ENCODE measurements at regions of chr6 and their contacts with region 1.

Region 1: GRCh38 chr6:109187399-109188114 is 92.2 kb downstream of the CEP57L1 start:
- DNase-seq: peak; percentile 18 to 48 (median 47)
- H3K4me3 ChIP-seq: peak overlapping the region in 1 of 3 experiments; percentile 26
- H3K4me3 Mint-ChIP-seq: no peak overlapping the region
- H3K27ac ChIP-seq: no peak overlapping the region
- H3K27ac Mint-ChIP-seq: no peak overlapping the region
- H3K4me1 ChIP-seq: peaks cover 0 to 5% of the 10 kb centered on the region in 2 donors
- H3K4me1 Mint-ChIP-seq: peaks cover 9% of the 10 kb centered on the region
- H3K27me3 ChIP-seq: no peaks in the 10 kb centered on the region
- H3K27me3 Mint-ChIP-seq: peaks cover 0 to 1% (median 1%) of the 10 kb centered on the region in 3 donors
- CTCF ChIP-seq: peak; percentile 98

Region 2: GRCh38 chr6:109237077-109237985 is 49.8 kb after region 1 on chr6:
- intact Hi-C with region 1: no loop called
- DNase-seq: peak; percentile 85 to 94 (median 93)
- H3K4me3 ChIP-seq: peak overlapping the region; percentile 8 to 56 (median 55)
- H3K4me3 Mint-ChIP-seq: peak overlapping the region; percentile 62 to 79
- H3K27ac ChIP-seq: peak overlapping the region; percentile 92 to 96
- H3K27ac Mint-ChIP-seq: peak overlapping the region; percentile 96 to 99 (median 99)
- H3K4me1 ChIP-seq: peaks cover 66 to 75% of the 10 kb centered on the region in 2 donors
- H3K4me1 Mint-ChIP-seq: peaks cover 62% of the 10 kb centered on the region
- H3K27me3 ChIP-seq: no peaks in the 10 kb centered on the region
- H3K27me3 Mint-ChIP-seq: peaks cover 0 to 2% (median 0%) of the 10 kb centered on the region in 3 donors
- CTCF ChIP-seq: no peak

Region 3: DNA sequence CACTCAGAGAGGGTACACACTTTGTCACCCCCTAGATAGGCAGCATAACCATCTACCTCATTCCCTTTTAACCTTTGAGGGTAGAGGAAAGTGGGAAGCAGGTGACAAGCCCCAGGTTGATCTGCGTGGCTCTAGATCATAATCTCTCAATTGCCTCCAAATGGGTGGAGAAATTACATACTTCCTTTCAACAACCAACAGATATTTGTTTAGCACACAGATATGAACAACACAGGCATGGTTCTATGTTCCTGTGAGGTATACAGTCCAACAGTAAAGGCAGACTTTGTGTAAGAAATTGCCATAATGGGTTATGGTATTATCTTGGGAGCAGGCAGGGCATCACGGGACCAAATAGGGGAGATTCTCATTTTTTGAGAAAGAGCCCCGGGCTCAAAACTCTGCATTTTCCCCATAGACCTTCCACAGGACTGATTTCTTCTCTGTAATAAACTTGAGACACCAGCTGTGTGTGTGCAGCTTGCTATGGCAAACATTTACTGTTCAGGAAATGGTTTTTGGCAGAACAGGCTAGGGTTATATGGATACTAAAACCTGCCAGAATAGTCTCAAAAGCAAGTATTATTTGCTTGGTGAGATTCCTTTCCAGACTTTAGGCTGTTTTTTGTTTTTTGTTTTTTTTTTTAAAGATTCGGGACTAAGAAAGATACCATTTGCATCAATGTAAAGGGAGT is 68.5 kb after region 1 on chr6:
- intact Hi-C with region 1: no loop called
- DNase-seq: no peak
- H3K4me3 ChIP-seq: no peak overlapping the region
- H3K4me3 Mint-ChIP-seq: no peak overlapping the region
- H3K27ac ChIP-seq: no peak overlapping the region
- H3K27ac Mint-ChIP-seq: no peak overlapping the region
- H3K4me1 ChIP-seq: no peaks in the 10 kb centered on the region
- H3K4me1 Mint-ChIP-seq: peaks cover 2% of the 10 kb centered on the region
- H3K27me3 ChIP-seq: no peaks in the 10 kb centered on the region
- H3K27me3 Mint-ChIP-seq: peaks cover 0 to 2% (median 1%) of the 10 kb centered on the region in 3 donors
- CTCF ChIP-seq: no peak

Region 4: DNA sequence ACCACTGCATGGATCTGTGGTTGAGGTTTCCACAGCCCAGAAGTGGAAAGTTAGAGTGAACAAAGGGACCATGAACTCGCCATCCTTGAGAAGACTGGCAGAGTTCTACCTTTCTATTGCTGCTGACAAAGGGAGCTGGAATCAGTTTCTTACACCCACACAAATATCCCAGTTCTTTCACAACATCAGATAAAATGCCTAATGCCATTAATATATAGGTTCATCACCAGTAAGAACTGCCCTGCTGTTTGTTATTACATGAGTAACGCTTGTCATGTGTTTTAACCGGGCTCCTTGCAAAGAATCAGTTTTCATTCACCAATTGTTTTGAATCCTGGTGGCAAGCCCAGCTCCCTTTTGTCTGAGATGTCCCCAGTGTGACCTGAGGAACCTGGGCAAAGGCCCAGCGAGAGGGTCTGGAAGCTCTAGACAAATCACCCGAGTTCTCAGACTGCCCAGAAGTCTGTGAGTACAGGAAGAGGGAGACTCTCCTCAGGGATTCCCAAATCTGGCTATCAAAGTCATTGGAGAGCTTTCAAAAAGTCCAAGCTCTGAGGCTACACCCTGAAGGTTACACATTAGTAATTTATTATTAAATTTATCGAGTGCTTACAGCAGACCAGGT is 202.2 kb after region 1 on chr6:
- intact Hi-C with region 1: loop called in 1 of 2 experiments (anchors 5 kb)
- DNase-seq: no peak
- H3K4me3 ChIP-seq: no peak overlapping the region
- H3K4me3 Mint-ChIP-seq: no peak overlapping the region
- H3K27ac ChIP-seq: no peak overlapping the region
- H3K27ac Mint-ChIP-seq: peak overlapping the region in 3 of 7 donors; percentile 15 to 88 (median 22)
- H3K4me1 ChIP-seq: peaks cover 26 to 31% of the 10 kb centered on the region in 2 donors
- H3K4me1 Mint-ChIP-seq: peaks cover 48% of the 10 kb centered on the region
- H3K27me3 ChIP-seq: no peaks in the 10 kb centered on the region
- H3K27me3 Mint-ChIP-seq: peaks cover 0 to 3% (median 0%) of the 10 kb centered on the region in 3 donors
- CTCF ChIP-seq: no peak

Region 5: GRCh38 chr6:109397020-109397419 is 209.5 kb after region 1 on chr6:
- intact Hi-C with region 1: loop called in 1 of 2 experiments (anchors 5 kb)
- DNase-seq: peak in 2 of 3 donors; percentile 54 to 66
- H3K4me3 ChIP-seq: no peak overlapping the region
- H3K4me3 Mint-ChIP-seq: no peak overlapping the region
- H3K27ac ChIP-seq: no peak overlapping the region
- H3K27ac Mint-ChIP-seq: peak overlapping the region in 2 of 7 donors; percentile 80 to 83
- H3K4me1 ChIP-seq: peaks cover 19 to 25% of the 10 kb centered on the region in 2 donors
- H3K4me1 Mint-ChIP-seq: peaks cover 40% of the 10 kb centered on the region
- H3K27me3 ChIP-seq: no peaks in the 10 kb centered on the region
- H3K27me3 Mint-ChIP-seq: peaks cover 0 to 7% (median 2%) of the 10 kb centered on the region in 3 donors
- CTCF ChIP-seq: peak; percentile 51

Region 6: GRCh38 chr6:109440331-109441068 is 252.9 kb after region 1 on chr6 and contains the starts of genes PPIL6 and SMPD2:
- intact Hi-C with region 1: loop called in 1 of 2 experiments (anchors 5 kb)
- DNase-seq: peak; percentile 73 to 84 (median 81)
- H3K4me3 ChIP-seq: peak within 1 kb of the TSS; percentile 52 to 87 (median 71)
- H3K4me3 Mint-ChIP-seq: peak within 1 kb of the TSS; percentile 96
- H3K27ac ChIP-seq: peak within 1 kb of the TSS; percentile 53 to 85
- H3K27ac Mint-ChIP-seq: peak within 1 kb of the TSS; percentile 87 to 97 (median 92)
- H3K4me1 ChIP-seq: peaks cover 20 to 32% of the 10 kb centered on the region in 2 donors
- H3K4me1 Mint-ChIP-seq: peaks cover 34% of the 10 kb centered on the region
- H3K27me3 ChIP-seq: peaks cover 0 to 4% of the 10 kb centered on the region in 2 donors
- H3K27me3 Mint-ChIP-seq: peaks cover 1 to 9% (median 4%) of the 10 kb centered on the region in 3 donors
- CTCF ChIP-seq: peak; percentile 25
- polyA plus RNA-seq, gene PPIL6: 0.09 to 0.28 (median 0.14) TPM
- polyA plus RNA-seq, gene SMPD2: 9.5 to 14.3 (median 12.3) TPM